PC-3 (cell line): ENCODE measurements at regions of chrX and their contacts with region 1.

Region 1: GRCh38 chrX:129600981-129601424 is 53.8 kb downstream of the APLN start:
- DNase-seq: peak; percentile 51
- ATAC-seq: peak; percentile 41
- H3K4me3 ChIP-seq: no peak overlapping the region
- H3K27ac ChIP-seq: no peak overlapping the region
- H3K4me1 ChIP-seq: peaks cover 9% of the 10 kb centered on the region; the same call in 1 of the 2 replicates
- H3K27me3 ChIP-seq: no peaks in the 10 kb centered on the region
- CTCF ChIP-seq: peak; percentile 74

Region 2: DNA sequence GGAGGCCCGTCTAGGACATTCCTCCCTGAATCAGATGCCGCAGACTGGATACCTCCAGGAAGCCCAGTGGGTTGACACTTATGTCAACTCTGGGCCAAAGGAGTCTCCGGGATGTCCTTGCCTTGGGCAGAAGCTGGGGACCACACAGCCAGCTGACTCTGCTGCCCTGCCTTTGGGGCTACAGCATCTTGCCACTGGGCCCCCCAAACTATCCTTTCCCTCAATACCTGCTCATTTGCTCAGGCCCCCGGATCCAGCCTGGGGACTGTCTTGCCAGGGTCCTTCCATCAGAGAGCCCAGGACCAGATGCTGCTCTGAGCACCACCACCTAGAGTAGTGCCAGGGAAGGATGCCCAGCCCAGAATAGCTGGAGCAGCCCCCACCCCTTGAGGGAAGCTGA is 589.8 kb after region 1 on chrX:
- CTCF ChIA-PET with region 1: no interaction called
- POLR2A ChIA-PET with region 1: no interaction called
- intact Hi-C with region 1: loop called (anchors 5 kb)
- DNase-seq: no peak
- ATAC-seq: no peak
- H3K4me3 ChIP-seq: no peak overlapping the region
- H3K27ac ChIP-seq: no peak overlapping the region
- H3K4me1 ChIP-seq: no peaks in the 10 kb centered on the region
- H3K27me3 ChIP-seq: no peaks in the 10 kb centered on the region
- CTCF ChIP-seq: no peak